Tibial artery (tissue), 4 donors: ENCODE measurements at regions of chr4 and their contacts with region 1.

Region 1: GRCh38 chr4:163332500-163333406 is at the start of gene NPY1R:
- DNase-seq: peak; percentile 81 to 90
- H3K4me3 ChIP-seq: peak within 1 kb of the TSS; percentile 84 to 90
- H3K27ac ChIP-seq: peak within 1 kb of the TSS; percentile 84 to 87
- H3K4me1 ChIP-seq: peaks cover 0 to 50% (median 2%) of the 10 kb centered on the region in 4 donors
- H3K27me3 ChIP-seq: no peaks in the 10 kb centered on the region
- CTCF ChIP-seq: peak; percentile 69 to 71

Region 2: DNA sequence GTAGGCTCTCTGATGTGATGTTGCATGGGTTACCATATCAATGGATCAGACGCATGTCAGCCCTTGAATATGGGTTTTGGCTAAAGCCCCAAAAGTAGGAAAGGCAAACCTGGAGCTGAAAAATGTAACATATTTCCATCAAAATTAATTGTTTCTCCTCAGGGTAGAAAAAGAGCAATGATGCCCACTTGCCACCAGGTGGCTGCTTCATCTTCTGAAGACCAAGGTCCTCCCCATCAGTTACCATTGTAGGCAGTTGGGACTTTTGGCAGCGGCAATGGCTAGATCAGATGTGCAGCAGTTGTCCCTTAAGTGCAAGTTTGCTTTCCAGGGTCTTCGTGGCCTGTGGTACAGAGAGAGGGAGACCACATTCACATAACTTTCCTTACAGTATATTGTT is 284.3 kb before region 1 on chr4:
- intact Hi-C with region 1: loop called (anchors 10 kb)
- DNase-seq: no peak
- H3K4me3 ChIP-seq: no peak overlapping the region
- H3K27ac ChIP-seq: no peak overlapping the region
- H3K4me1 ChIP-seq: peaks cover 0 to 34% (median 14%) of the 10 kb centered on the region in 4 donors
- H3K27me3 ChIP-seq: no peaks in the 10 kb centered on the region
- CTCF ChIP-seq: peak; percentile 21 to 23

Region 3: DNA sequence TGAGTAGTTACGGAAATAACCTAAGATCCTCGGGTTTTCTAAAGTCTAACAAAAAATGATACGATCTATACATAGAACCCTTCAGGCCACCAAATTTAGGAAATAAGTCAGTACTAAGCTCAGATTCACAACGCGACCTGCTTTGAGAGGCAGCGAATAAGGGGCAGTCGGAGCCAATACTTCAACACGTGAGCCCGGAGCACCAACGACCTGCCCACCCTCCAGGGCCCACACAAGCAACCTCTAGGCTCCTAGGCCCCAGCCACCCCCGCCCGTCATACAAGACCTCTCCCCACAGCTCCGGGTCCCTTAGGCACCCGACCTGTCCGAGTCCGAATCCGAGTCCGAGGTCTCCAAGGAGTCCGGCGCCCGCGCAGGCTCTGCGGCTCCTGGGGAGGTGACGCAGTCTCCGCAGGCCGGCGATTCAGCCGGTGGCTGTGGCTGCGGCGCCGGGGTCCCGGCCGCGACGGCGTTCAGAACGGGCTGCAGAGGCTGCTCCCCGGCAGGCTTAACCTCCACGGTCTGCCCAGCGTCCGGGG is 166.6 kb before region 1 on chr4:
- intact Hi-C with region 1: loop called (anchors 10 kb)
- DNase-seq: peak; percentile 44 to 78
- H3K4me3 ChIP-seq: peak overlapping the region; percentile 78 to 81
- H3K27ac ChIP-seq: peak overlapping the region; percentile 92 to 93
- H3K4me1 ChIP-seq: peaks cover 0 to 39% (median 17%) of the 10 kb centered on the region in 4 donors
- H3K27me3 ChIP-seq: no peaks in the 10 kb centered on the region
- CTCF ChIP-seq: no peak

Region 4: GRCh38 chr4:163544407-163545038 is 211.8 kb after region 1 on chr4:
- intact Hi-C with region 1: loop called (anchors 10 kb)
- DNase-seq: peak; percentile 39 to 71
- H3K4me3 ChIP-seq: peak overlapping the region; percentile 37 to 46
- H3K27ac ChIP-seq: peak overlapping the region; percentile 23
- H3K4me1 ChIP-seq: peaks cover 0 to 24% (median 3%) of the 10 kb centered on the region in 4 donors
- H3K27me3 ChIP-seq: no peaks in the 10 kb centered on the region
- CTCF ChIP-seq: peak; percentile 76 to 95